WTC11 (cell line): ENCODE measurements at regions of chr11 and their contacts with region 1.

Region 1: DNA sequence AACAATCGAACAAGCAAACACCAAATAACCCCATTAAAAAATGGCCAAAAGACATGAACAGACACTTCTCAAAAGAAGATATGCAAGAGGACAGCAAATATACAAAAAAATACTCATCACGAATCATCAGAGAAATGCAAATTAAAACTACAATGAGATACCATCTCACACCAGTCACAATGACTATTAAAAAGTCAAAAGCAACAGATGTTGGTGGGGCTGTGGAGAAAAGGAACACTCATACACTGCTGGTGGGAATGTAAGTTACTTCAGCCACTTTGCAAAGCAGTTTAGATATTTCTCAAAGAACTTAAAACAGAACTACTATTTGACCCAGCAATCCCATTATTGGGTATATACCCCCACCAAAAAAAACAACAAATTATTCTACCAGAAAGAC is 51.3 kb upstream of the FLI1 start:
- DNase-seq: no peak
- ATAC-seq: no peak
- H3K4me3 Mint-ChIP-seq: no peak overlapping the region
- H3K27ac Mint-ChIP-seq: no peak overlapping the region
- H3K4me1 Mint-ChIP-seq: peaks cover 5% of the 10 kb centered on the region; the same call in 1 of the 2 replicates
- H3K27me3 Mint-ChIP-seq: no peaks in the 10 kb centered on the region; the same call in none of the 2 replicates
- CTCF ChIP-seq: no peak

Region 2: DNA sequence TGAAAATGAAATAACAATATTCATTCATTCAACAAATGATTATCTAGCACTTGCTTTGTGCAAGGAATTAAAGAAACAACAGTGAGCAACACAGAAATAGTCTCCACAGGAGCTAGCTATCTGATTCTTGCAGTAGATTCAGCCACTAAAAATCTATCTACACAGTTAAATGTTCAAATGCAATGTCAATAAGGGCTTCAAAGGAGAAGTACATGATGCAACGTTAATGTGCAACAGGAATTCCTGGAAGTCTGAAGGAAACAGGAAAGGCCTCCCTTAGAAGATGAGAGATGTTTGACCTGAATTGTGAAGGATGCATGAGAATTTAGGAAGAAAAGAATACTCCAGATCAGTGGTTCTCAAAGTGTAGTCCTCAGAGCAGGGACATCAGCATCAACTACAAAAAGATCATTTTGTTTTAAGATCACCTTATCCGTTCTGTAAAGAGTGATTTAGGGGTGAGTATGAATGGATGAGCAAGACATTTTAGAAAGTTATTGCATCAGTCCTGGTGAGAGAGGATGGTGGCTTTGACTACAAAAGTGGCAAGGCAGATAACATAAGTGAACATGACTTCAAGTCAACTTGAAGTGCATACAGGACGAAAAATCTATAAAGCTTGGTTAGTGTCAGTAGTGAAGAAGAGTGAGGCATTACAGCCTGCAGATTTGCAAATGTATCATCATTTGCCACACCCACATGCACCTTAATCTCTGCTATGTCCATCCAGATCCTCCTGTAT is 151.2 kb before region 1 on chr11:
- CTCF ChIA-PET with region 1: no interaction called
- POLR2A ChIA-PET with region 1: interaction called, 10 read pairs
- DNase-seq: no peak
- ATAC-seq: no peak
- H3K4me3 Mint-ChIP-seq: no peak overlapping the region
- H3K27ac Mint-ChIP-seq: no peak overlapping the region
- H3K4me1 Mint-ChIP-seq: peaks cover 7% of the 10 kb centered on the region
- H3K27me3 Mint-ChIP-seq: no peaks in the 10 kb centered on the region
- CTCF ChIP-seq: no peak

Region 3: GRCh38 chr11:128624269-128625175 is 18.0 kb before region 1 on chr11:
- CTCF ChIA-PET with region 1: no interaction called
- POLR2A ChIA-PET with region 1: no interaction called
- DNase-seq: no peak
- ATAC-seq: no peak
- H3K4me3 Mint-ChIP-seq: no peak overlapping the region
- H3K27ac Mint-ChIP-seq: no peak overlapping the region
- H3K4me1 Mint-ChIP-seq: peaks cover 49% of the 10 kb centered on the region
- H3K27me3 Mint-ChIP-seq: peaks cover 31% of the 10 kb centered on the region
- CTCF ChIP-seq: no peak